ENCODE measurements at regions of chr12 and their contacts with region 1.

Region 1: DNA sequence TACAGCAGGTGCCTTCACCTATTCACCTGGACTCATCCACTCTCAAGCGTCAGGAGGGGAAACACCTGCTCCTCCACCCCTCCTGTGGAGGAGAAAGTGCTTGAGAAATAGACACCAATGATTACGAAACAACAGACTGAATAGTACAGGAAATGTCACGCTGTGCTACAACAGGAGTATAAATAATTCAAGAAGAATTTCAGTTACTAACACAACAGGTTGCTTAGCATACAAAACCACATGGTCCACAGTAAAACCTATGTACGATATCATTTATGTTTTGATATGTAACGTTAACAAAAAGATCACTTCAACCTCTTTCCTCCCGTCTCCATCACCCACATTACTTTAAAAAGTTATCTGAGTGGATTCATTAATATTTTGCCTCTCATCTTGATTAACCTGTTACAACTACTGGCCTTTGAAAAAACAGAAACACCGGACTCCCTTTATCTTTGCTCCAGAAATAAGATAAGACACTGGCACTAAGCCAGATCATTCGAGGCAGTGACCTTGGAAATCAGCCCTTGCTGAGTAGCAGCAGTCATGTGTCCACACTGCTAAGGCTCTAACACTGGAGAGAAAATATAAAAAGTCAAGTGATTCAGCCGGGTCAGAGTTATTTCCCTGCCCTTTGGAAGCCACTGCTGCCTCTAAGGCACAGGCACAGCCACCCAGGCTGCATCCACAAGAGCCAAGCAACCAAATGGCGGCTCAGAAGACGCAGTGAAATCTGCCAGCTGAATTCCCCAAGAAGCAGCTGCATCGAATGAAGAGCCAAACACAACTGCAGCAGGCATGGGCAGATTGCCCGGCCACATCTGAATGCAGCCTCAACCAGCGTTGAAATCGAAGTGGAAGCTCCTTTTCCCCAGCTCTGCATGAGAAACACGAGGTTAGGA is 40.9 kb downstream of the NT5DC3 start:
- DNase-seq: peak; percentile 56 to 72 (median 65)
- H3K4me3 ChIP-seq: peak overlapping the region in 1 of 3 experiments; percentile 42
- H3K4me3 Mint-ChIP-seq: peak overlapping the region; percentile 43 to 70
- H3K27ac ChIP-seq: peak overlapping the region; percentile 50 to 69
- H3K27ac Mint-ChIP-seq: peak overlapping the region; percentile 79 to 94 (median 88)
- H3K4me1 ChIP-seq: peaks cover 34 to 48% of the 10 kb centered on the region in 2 donors
- H3K4me1 Mint-ChIP-seq: peaks cover 51% of the 10 kb centered on the region
- H3K27me3 ChIP-seq: no peaks in the 10 kb centered on the region
- H3K27me3 Mint-ChIP-seq: peaks cover 0 to 3% (median 2%) of the 10 kb centered on the region in 3 donors
- CTCF ChIP-seq: no peak

Region 2: GRCh38 chr12:103626498-103626897 is 173.6 kb before region 1 on chr12:
- intact Hi-C with region 1: no loop called
- DNase-seq: no peak
- H3K4me3 ChIP-seq: no peak overlapping the region
- H3K4me3 Mint-ChIP-seq: no peak overlapping the region
- H3K27ac ChIP-seq: no peak overlapping the region
- H3K27ac Mint-ChIP-seq: no peak overlapping the region
- H3K4me1 ChIP-seq: no peaks in the 10 kb centered on the region
- H3K4me1 Mint-ChIP-seq: no peaks in the 10 kb centered on the region
- H3K27me3 ChIP-seq: no peaks in the 10 kb centered on the region
- H3K27me3 Mint-ChIP-seq: peaks cover 0 to 3% (median 1%) of the 10 kb centered on the region in 3 donors
- CTCF ChIP-seq: no peak

Region 3: DNA sequence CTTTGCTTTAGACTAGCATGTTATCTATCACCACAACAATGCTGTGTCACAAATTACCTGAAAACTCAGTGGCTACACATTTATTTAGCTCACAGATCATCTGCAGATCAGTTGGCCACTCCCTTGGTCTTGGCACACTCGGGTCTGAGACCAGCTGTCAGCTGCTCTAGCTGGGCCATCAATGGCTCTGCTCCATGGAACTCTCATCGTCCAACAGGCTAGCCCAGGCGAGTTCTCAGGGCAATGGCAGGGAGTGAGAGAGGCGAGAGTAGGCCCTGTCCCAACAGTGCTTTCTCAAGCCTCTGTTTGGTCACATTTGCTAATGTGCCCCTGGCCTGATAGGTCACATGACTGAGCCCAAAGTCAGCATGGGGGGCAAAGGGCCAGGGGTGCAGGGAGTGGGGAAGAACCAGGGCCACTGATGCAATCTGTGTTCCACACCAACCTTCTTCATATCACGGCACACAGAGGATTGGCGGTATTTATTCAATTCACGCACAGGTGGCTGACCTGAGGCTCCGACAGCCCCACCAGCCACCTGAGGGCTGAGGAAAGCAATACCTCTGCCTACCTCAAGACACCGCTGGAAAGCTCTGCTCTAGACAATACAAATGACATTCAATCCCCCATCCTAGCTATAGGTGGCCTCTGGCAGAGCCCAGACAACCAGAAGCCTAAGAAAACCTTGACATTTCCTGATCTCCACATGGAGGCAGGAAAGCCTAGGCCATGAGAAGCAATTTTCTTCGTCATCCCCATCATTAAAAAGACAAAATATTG is 41.6 kb before region 1 on chr12:
- intact Hi-C with region 1: no loop called
- DNase-seq: no peak
- H3K4me3 ChIP-seq: no peak overlapping the region
- H3K4me3 Mint-ChIP-seq: no peak overlapping the region
- H3K27ac ChIP-seq: no peak overlapping the region
- H3K27ac Mint-ChIP-seq: peak overlapping the region in 1 of 7 donors; percentile 6
- H3K4me1 ChIP-seq: no peaks in the 10 kb centered on the region
- H3K4me1 Mint-ChIP-seq: no peaks in the 10 kb centered on the region
- H3K27me3 ChIP-seq: no peaks in the 10 kb centered on the region
- H3K27me3 Mint-ChIP-seq: peaks cover 0 to 3% (median 0%) of the 10 kb centered on the region in 3 donors
- CTCF ChIP-seq: no peak

Region 4: GRCh38 chr12:103821773-103822172 is 21.7 kb after region 1 on chr12:
- intact Hi-C with region 1: no loop called
- DNase-seq: no peak
- H3K4me3 ChIP-seq: no peak overlapping the region
- H3K4me3 Mint-ChIP-seq: no peak overlapping the region
- H3K27ac ChIP-seq: no peak overlapping the region
- H3K27ac Mint-ChIP-seq: no peak overlapping the region
- H3K4me1 ChIP-seq: peaks cover 0 to 3% of the 10 kb centered on the region in 2 donors
- H3K4me1 Mint-ChIP-seq: peaks cover 7% of the 10 kb centered on the region
- H3K27me3 ChIP-seq: no peaks in the 10 kb centered on the region
- H3K27me3 Mint-ChIP-seq: no peaks in the 10 kb centered on the region
- CTCF ChIP-seq: no peak

Region 5: GRCh38 chr12:103833891-103834290 is 33.8 kb after region 1 on chr12:
- intact Hi-C with region 1: loop called in 1 of 2 experiments (anchors 5 kb)
- DNase-seq: no peak
- H3K4me3 ChIP-seq: no peak overlapping the region
- H3K4me3 Mint-ChIP-seq: no peak overlapping the region
- H3K27ac ChIP-seq: peak overlapping the region in 1 of 2 donors; percentile 43
- H3K27ac Mint-ChIP-seq: peak overlapping the region in 4 of 7 donors; percentile 63 to 81 (median 69)
- H3K4me1 ChIP-seq: peaks cover 39 to 54% of the 10 kb centered on the region in 2 donors
- H3K4me1 Mint-ChIP-seq: peaks cover 51% of the 10 kb centered on the region
- H3K27me3 ChIP-seq: no peaks in the 10 kb centered on the region
- H3K27me3 Mint-ChIP-seq: no peaks in the 10 kb centered on the region
- CTCF ChIP-seq: no peak

Region 6: DNA sequence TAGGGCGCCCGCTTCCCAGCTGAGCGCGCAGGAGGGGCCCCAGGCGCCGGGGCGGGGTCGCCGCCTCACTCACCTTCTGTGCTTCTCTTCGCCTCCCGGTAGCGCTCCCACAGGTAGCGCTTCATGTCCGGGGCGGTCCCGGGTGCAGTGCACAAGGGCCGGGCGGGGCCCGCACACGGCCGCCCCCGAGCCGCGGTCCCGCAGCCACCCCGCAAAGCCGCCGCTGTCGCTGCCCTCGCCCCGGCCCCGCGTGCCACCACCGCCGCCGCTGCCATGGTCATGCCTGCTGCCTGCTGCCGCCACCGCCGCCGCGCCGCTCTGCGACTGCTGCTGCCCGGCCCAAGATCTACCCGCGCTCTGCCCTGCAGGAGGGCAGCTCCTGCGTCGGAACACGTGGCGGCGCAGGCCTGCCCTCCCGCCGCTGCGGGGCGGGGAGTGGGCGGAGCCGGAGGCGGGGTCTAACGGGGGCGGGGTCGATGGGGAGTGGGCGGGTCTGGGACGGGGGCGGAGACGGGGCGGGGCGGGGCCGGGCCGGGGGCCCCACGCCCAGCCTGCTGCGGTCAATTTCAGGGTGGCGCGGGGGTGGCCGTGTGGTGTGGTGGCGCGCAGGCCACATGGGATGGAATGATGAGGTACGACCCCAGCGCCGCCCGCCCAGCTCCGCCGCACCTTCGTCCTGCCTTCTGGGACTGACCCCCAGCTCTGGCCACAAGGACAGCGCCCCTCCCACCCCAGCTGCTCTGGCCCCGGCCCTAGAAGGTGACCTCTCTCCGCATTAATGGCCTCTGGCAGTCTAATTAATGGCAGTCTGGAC is 41.0 kb after region 1 on chr12 and contains the start of gene NT5DC3:
- intact Hi-C with region 1: loop called in 1 of 2 experiments (anchors 5 kb)
- DNase-seq: peak; percentile 78 to 83 (median 79)
- H3K4me3 ChIP-seq: peak within 1 kb of the TSS; percentile 58 to 90 (median 87)
- H3K4me3 Mint-ChIP-seq: peak within 1 kb of the TSS; percentile 92 to 93
- H3K27ac ChIP-seq: peak within 1 kb of the TSS in 1 of 2 donors; percentile 41
- H3K27ac Mint-ChIP-seq: peak within 1 kb of the TSS in 6 of 7 donors; percentile 41 to 83 (median 72)
- H3K4me1 ChIP-seq: peaks cover 22 to 31% of the 10 kb centered on the region in 2 donors
- H3K4me1 Mint-ChIP-seq: peaks cover 28% of the 10 kb centered on the region
- H3K27me3 ChIP-seq: no peaks in the 10 kb centered on the region
- H3K27me3 Mint-ChIP-seq: peaks cover 2 to 7% (median 5%) of the 10 kb centered on the region in 3 donors
- CTCF ChIP-seq: no peak
- polyA plus RNA-seq, gene NT5DC3: 0.27 to 4.8 (median 0.93) TPM

Region 7: GRCh38 chr12:104865080-104865479 is 1065.0 kb after region 1 on chr12:
- intact Hi-C with region 1: no loop called
- DNase-seq: peak in 2 of 3 donors; percentile 9 to 13
- H3K4me3 ChIP-seq: no peak overlapping the region
- H3K4me3 Mint-ChIP-seq: no peak overlapping the region
- H3K27ac ChIP-seq: peak overlapping the region in 1 of 2 donors; percentile 43
- H3K27ac Mint-ChIP-seq: peak overlapping the region in 3 of 7 donors; percentile 24 to 69 (median 55)
- H3K4me1 ChIP-seq: peaks cover 14 to 19% of the 10 kb centered on the region in 2 donors
- H3K4me1 Mint-ChIP-seq: peaks cover 23% of the 10 kb centered on the region
- H3K27me3 ChIP-seq: no peaks in the 10 kb centered on the region
- H3K27me3 Mint-ChIP-seq: peaks cover 0 to 2% (median 0%) of the 10 kb centered on the region in 3 donors
- CTCF ChIP-seq: no peak

Measured in CD14-positive monocyte (primary cell).